ENCODE measurements at regions of chr2 and their contacts with region 1.

Region 1: GRCh38 chr2:46364797-46365457 is 67.7 kb downstream of the EPAS1 start:
- DNase-seq: peak; percentile 52
- H3K4me3 Mint-ChIP-seq: no peak overlapping the region
- H3K27ac Mint-ChIP-seq: no peak overlapping the region
- H3K4me1 Mint-ChIP-seq: no peaks in the 10 kb centered on the region
- H3K27me3 Mint-ChIP-seq: no peaks in the 10 kb centered on the region
- CTCF ChIP-seq: peak; percentile 49

Region 2: GRCh38 chr2:45993476-45993991 is 371.4 kb before region 1 on chr2:
- CTCF ChIA-PET with region 1: no interaction called
- intact Hi-C with region 1: loop called (anchors 5 kb)
- DNase-seq: peak; percentile 70
- H3K4me3 Mint-ChIP-seq: peak overlapping the region; percentile 9
- H3K27ac Mint-ChIP-seq: no peak overlapping the region
- H3K4me1 Mint-ChIP-seq: peaks cover 25% of the 10 kb centered on the region
- H3K27me3 Mint-ChIP-seq: no peaks in the 10 kb centered on the region
- CTCF ChIP-seq: peak; percentile 62

Region 3: DNA sequence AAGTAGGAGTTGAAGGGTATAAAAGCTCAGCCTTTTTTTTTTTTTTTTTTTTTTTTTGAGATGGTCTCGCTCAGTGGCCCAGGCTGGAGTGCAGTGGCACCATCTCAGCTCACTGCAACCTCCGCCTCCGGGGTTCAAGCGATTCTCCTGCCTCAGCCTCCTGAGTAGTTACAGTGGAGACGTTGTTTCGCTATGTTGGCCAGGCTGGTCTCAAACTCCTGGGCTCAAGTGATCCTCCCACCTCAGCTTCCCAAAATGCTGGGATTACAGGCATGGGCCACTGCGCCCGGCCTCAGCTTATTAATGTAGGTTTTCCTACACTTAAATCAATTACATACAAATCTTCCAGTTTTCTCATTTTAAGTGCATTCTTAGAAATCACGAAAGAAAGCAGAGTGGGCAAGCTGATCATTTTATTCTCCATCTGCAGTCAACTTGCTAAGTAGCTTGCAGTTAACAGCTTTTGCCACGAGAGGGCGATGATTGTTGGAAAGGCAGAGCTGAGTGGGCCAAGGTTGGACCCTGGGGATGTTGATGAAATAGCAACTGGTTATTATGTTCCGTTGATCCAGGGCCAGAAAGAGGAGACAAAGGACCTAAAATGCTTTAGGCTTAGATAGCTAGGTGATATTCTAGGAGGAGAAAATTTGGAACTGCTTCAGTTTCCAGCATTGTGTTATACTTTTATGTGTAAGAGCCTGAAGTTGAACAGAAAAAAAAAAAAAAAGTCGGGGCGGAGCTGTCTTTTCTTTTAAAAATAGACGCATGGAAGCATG is 302.1 kb before region 1 on chr2:
- CTCF ChIA-PET with region 1: interaction called, 7 read pairs
- intact Hi-C with region 1: loop called (anchors 2 kb)
- DNase-seq: peak; percentile 77
- H3K4me3 Mint-ChIP-seq: no peak overlapping the region
- H3K27ac Mint-ChIP-seq: no peak overlapping the region
- H3K4me1 Mint-ChIP-seq: peaks cover 16% of the 10 kb centered on the region
- H3K27me3 Mint-ChIP-seq: no peaks in the 10 kb centered on the region
- CTCF ChIP-seq: peak; percentile 70

Region 4: GRCh38 chr2:46230115-46230571 is 134.8 kb before region 1 on chr2:
- CTCF ChIA-PET with region 1: interaction called, 5 read pairs
- intact Hi-C with region 1: loop called (anchors 2 kb)
- DNase-seq: peak; percentile 72
- H3K4me3 Mint-ChIP-seq: peak overlapping the region; percentile 14
- H3K27ac Mint-ChIP-seq: peak overlapping the region; percentile 90
- H3K4me1 Mint-ChIP-seq: peaks cover 54% of the 10 kb centered on the region
- H3K27me3 Mint-ChIP-seq: no peaks in the 10 kb centered on the region
- CTCF ChIP-seq: no peak

Region 5: DNA sequence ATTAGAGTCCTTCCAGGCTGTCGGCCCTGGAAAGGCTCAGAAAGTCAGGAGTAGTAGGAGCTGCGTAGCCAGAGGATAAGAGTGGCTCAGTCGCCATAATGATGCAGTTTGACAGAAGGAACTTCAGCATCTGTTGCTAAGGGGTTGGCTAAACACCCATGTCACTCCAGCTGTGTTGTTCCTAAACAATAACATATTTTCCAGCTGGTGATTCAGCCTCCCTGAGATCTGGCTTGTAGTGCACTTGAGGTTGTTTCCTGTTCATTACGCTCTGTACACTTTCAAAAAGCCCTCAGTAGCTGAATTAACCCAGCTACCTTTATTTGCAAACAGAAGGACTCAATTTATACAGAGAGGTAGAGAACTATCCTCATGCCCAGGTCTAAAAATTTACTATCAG is 107.5 kb before region 1 on chr2:
- CTCF ChIA-PET with region 1: no interaction called
- intact Hi-C with region 1: no loop called
- DNase-seq: no peak
- H3K4me3 Mint-ChIP-seq: no peak overlapping the region
- H3K27ac Mint-ChIP-seq: no peak overlapping the region
- H3K4me1 Mint-ChIP-seq: no peaks in the 10 kb centered on the region
- H3K27me3 Mint-ChIP-seq: no peaks in the 10 kb centered on the region
- CTCF ChIP-seq: no peak

Region 6: GRCh38 chr2:46461011-46461674 is 96.2 kb after region 1 on chr2:
- CTCF ChIA-PET with region 1: no interaction called
- intact Hi-C with region 1: loop called (anchors 2 kb)
- DNase-seq: peak; percentile 82
- H3K4me3 Mint-ChIP-seq: no peak overlapping the region
- H3K27ac Mint-ChIP-seq: no peak overlapping the region
- H3K4me1 Mint-ChIP-seq: peaks cover 22% of the 10 kb centered on the region
- H3K27me3 Mint-ChIP-seq: no peaks in the 10 kb centered on the region
- CTCF ChIP-seq: peak; percentile 91